ENCODE measurements at regions of chr5 and their contacts with region 1.

Region 1: GRCh38 chr5:82225525-82226172 is 52.5 kb downstream of the RPS23 start:
- DNase-seq: peak; percentile 29
- H3K4me3 ChIP-seq: no peak overlapping the region
- CTCF ChIP-seq: peak; percentile 70

Region 2: GRCh38 chr5:81425569-81425968 is 800.1 kb before region 1 on chr5:
- CTCF ChIA-PET with region 1: interaction called, 25 read pairs
- POLR2A ChIA-PET with region 1: no interaction called
- DNase-seq: no peak
- H3K4me3 ChIP-seq: no peak overlapping the region
- CTCF ChIP-seq: no peak

Region 3: GRCh38 chr5:81506900-81507588 is 718.6 kb before region 1 on chr5:
- CTCF ChIA-PET with region 1: interaction called, 13 read pairs
- POLR2A ChIA-PET with region 1: no interaction called
- DNase-seq: peak; percentile 71
- H3K4me3 ChIP-seq: no peak overlapping the region
- CTCF ChIP-seq: peak; percentile 81

Region 4: DNA sequence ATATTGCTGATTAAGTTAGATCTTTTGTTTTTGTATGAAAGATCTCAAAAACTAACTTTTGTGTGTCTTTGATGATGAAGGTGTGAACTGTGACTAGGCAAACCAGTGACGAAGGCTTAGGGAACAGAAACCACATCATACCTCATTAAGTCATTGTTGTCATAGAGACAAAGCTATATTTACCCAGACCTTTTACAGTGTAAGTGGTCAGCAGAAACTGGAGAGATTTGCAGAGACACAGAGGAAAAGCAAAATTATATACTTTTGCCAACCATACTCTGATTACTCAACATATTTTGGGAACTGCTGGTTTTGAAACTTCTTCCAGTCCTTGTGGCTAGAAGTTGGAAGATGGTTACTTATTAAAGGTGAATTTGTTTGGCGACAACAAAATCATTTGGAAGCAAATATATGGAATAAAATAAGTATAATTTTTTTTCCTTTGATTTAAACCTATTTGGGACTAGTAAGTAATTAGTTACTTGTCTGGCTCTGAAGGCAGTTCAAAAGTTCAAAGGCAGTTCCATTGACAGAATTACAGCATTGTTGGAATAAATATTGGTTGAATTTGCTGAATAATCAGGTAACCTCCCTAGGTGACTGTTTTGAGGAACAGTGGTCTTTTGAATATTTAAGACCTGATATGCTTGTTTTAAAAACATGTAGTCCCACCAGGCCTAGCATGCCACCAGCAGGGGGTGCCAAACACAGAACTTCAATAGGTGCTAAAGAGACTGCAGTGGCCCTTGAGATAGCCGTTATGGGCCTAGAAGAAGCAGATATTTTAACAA is 51.3 kb before region 1 on chr5:
- CTCF ChIA-PET with region 1: interaction called, 10 read pairs
- POLR2A ChIA-PET with region 1: no interaction called
- DNase-seq: peak; percentile 42
- H3K4me3 ChIP-seq: no peak overlapping the region
- CTCF ChIP-seq: peak; percentile 55

Region 5: GRCh38 chr5:82278095-82278918 is 52.7 kb after region 1 on chr5 and contains the start of gene RPS23:
- CTCF ChIA-PET with region 1: no interaction called
- POLR2A ChIA-PET with region 1: no interaction called
- DNase-seq: peak; percentile 38
- H3K4me3 ChIP-seq: peak within 1 kb of the TSS; percentile 93
- CTCF ChIP-seq: no peak

Region 6: DNA sequence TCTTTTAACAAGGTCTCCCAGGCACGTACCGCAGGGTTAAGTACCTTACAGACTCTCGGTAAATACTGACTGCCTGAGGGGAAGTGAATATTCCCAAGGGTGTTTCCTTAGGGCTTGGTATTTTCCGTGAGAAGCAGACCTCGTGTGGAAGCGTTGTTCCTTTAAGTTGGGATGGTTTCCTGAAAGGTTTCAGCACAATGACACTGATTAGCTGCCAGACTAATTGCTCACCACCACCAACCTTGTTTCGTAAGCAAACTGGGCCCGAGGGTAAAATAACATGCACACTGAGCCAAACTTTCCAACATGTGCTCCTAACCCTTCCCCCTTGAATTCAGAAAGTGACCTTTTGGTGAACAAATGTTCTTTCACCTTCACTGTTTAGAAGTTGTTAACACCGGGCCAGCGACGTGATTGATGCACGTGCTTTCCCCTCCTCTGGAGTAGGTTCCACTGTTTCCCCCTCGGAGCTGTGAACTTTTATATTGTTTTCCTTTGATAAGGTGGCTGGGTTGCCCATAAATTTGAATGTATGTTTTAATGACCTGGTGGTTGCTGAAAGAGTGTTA is 180.6 kb after region 1 on chr5:
- CTCF ChIA-PET with region 1: no interaction called
- POLR2A ChIA-PET with region 1: no interaction called
- DNase-seq: peak; percentile 91
- H3K4me3 ChIP-seq: no peak overlapping the region
- CTCF ChIP-seq: no peak

Measured in AG04449 (cell line).